Esophagus squamous epithelium (tissue), 5 donors: ENCODE measurements at regions of chrX and their contacts with region 1.

Region 1: DNA sequence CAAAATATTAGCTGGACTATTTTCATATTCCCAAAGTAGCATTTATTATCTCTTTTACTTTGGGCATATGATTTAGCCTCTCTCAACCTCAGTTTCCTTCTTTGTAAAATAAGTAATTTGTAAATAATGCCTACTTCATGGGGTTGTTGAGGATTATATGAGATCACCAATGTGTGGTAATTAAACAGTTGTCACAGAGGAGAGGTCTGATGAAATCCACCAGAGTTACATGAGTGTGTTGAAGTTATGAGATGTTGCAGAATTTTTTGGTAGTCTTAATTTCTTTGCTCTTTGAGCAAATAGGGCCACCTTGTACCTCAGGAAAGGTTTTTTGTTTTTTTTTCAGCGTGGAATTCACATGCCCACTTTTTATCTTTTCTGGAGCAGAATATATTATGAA is 1.4 kb downstream of the COX7B start:
- DNase-seq: no peak
- H3K4me3 ChIP-seq: peak overlapping the region; percentile 45 to 73 (median 60)
- H3K27ac ChIP-seq: peak overlapping the region; percentile 83 to 92 (median 91)
- H3K4me1 ChIP-seq: peaks cover 0 to 27% (median 4%) of the 10 kb centered on the region in 3 donors
- H3K27me3 ChIP-seq: no peaks in the 10 kb centered on the region
- CTCF ChIP-seq: no peak
- POLR2A ChIP-seq: no peak

Region 2: GRCh38 chrX:77658886-77659285 is 241.8 kb before region 1 on chrX:
- intact Hi-C with region 1: no loop called
- DNase-seq: no peak
- H3K4me3 ChIP-seq: no peak overlapping the region
- H3K27ac ChIP-seq: no peak overlapping the region
- H3K4me1 ChIP-seq: no peaks in the 10 kb centered on the region
- H3K27me3 ChIP-seq: no peaks in the 10 kb centered on the region
- CTCF ChIP-seq: no peak
- POLR2A ChIP-seq: no peak

Region 3: DNA sequence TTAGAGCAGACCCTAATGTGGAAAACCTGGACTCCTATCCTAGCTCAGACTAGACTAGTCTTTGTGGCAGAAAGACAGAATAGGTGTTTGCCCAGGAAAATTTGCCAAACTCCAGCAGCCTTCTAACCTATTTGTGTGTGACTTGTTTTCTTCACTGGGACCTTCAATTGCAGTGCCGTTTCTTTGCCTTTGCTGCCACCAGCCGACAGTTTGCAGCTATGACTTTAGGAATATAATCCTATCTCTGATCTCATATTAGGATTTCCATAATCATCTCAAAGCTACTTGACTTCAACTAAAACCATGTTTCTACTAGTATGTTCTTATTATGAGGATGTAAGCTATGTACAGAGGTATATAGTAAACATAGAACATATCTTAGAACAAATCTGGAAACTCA is 129.0 kb after region 1 on chrX:
- intact Hi-C with region 1: loop called (anchors 10 kb)
- DNase-seq: no peak
- H3K4me3 ChIP-seq: no peak overlapping the region
- H3K27ac ChIP-seq: no peak overlapping the region
- H3K4me1 ChIP-seq: peaks cover 0 to under 1% (median 0%) of the 10 kb centered on the region in 3 donors
- H3K27me3 ChIP-seq: no peaks in the 10 kb centered on the region
- CTCF ChIP-seq: peak in 4 of 6 experiments; percentile 32 to 64 (median 37)
- POLR2A ChIP-seq: no peak